HCT116 (cell line): ENCODE measurements at regions of chr17 and their contacts with region 1.

Region 1: GRCh38 chr17:48804925-48805411 is 12.1 kb downstream of the TTLL6 start:
- DNase-seq: peak; percentile 77
- ATAC-seq: peak; percentile 100
- H3K4me3 ChIP-seq: peak overlapping the region in 1 of 2 experiments; percentile 4; a peak in 2 of 4 replicates
- H3K27ac ChIP-seq: no peak overlapping the region
- H3K4me1 ChIP-seq: peaks cover 4 to 11% of the 10 kb centered on the region in 2 experiments; a peak in 3 of 4 replicates
- H3K27me3 ChIP-seq: no peaks in the 10 kb centered on the region
- CTCF ChIP-seq: peak; percentile 97 to 100 (median 100)
- POLR2A ChIP-seq: no peak
- RAD21 ChIP-seq: peak; percentile 99

Region 2: GRCh38 chr17:48335858-48336500 is 469.0 kb before region 1 on chr17:
- CTCF ChIA-PET with region 1: no interaction called
- POLR2A ChIA-PET with region 1: no interaction called
- RAD21 ChIA-PET with region 1: no interaction called
- intact Hi-C with region 1: no loop called
- DNase-seq: peak; percentile 78
- ATAC-seq: peak; percentile 85
- H3K4me3 ChIP-seq: no peak overlapping the region
- H3K27ac ChIP-seq: no peak overlapping the region
- H3K4me1 ChIP-seq: peaks cover 0 to 9% of the 10 kb centered on the region in 2 experiments; a peak in 2 of 4 replicates
- H3K27me3 ChIP-seq: no peaks in the 10 kb centered on the region
- CTCF ChIP-seq: peak; percentile 64 to 93 (median 92)
- POLR2A ChIP-seq: no peak
- RAD21 ChIP-seq: peak; percentile 85

Region 3: DNA sequence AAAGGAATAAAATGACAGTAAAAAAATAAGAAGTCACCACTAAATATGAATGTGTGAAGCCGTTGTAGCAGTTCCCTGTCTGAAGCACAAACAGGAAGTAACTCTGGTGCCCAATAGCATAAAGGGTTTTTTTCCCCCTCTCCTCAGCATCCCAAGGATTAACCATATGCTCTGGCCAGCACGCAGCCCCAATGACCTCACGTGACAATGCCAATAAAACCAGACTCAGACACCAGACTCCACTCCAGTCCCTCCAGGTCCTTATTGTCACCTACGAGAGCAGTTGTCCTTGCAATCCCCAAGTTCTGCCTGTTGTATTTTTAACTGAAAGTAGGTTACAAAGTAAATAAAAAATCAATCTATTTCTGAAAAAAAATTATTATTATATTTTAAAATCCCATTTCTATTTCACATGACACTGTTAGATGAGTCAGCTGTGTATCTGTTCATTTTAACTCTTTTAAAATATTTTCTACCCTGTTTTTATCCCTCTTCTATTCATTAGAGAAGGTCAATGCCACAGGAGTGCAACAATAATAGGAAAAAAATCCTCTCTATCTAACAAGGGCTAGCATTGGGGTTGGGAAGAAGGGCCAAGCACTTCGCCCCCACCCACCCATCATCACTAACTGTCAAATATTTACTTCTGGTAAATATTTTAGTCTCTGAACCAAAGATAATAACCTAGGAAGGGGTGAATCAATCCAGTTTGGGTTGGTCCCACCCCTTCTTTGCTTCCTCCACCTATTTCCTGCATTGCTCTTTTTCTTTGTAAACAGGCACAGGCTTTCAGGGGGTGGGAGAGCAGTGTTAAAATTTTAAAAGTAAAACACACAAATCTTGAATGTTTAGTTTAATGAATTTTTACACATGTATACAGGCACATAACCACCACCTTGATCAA is 89.2 kb before region 1 on chr17:
- CTCF ChIA-PET with region 1: no interaction called
- POLR2A ChIA-PET with region 1: no interaction called
- RAD21 ChIA-PET with region 1: no interaction called
- intact Hi-C with region 1: no loop called
- DNase-seq: no peak
- ATAC-seq: no peak
- H3K4me3 ChIP-seq: no peak overlapping the region
- H3K27ac ChIP-seq: no peak overlapping the region
- H3K4me1 ChIP-seq: no peaks in the 10 kb centered on the region
- H3K27me3 ChIP-seq: 0 out of 2 replicates have a peak, but pooled peaks cover 4% of the 10 kb centered on the region
- CTCF ChIP-seq: no peak
- POLR2A ChIP-seq: no peak
- RAD21 ChIP-seq: no peak

Region 4: GRCh38 chr17:48816774-48817590 is 12.0 kb after region 1 on chr17 and contains the start of gene TTLL6:
- CTCF ChIA-PET with region 1: interaction called, 60 read pairs
- POLR2A ChIA-PET with region 1: interaction called, 8 read pairs
- RAD21 ChIA-PET with region 1: no interaction called
- intact Hi-C with region 1: no loop called
- DNase-seq: peak; percentile 89
- ATAC-seq: peak; percentile 98
- H3K4me3 ChIP-seq: peak within 1 kb of the TSS; percentile 41 to 59
- H3K27ac ChIP-seq: no peak within 1 kb of the TSS; the same call in 1 of the 2 replicates
- H3K4me1 ChIP-seq: peaks cover 9 to 17% of the 10 kb centered on the region in 2 experiments
- H3K27me3 ChIP-seq: no peaks in the 10 kb centered on the region
- CTCF ChIP-seq: no peak
- POLR2A ChIP-seq: no peak
- RAD21 ChIP-seq: no peak
- total RNA-seq, gene TTLL6: 0.79 TPM

Region 5: GRCh38 chr17:48871551-48872351 is 66.8 kb after region 1 on chr17:
- CTCF ChIA-PET with region 1: interaction called, 237 read pairs
- POLR2A ChIA-PET with region 1: no interaction called
- RAD21 ChIA-PET with region 1: interaction called in 1 of 2 experiments, 3 read pairs
- intact Hi-C with region 1: no loop called
- DNase-seq: no peak
- ATAC-seq: no peak
- H3K4me3 ChIP-seq: no peak overlapping the region
- H3K27ac ChIP-seq: no peak overlapping the region
- H3K4me1 ChIP-seq: peaks cover 6 to 8% of the 10 kb centered on the region in 2 experiments; a peak in 2 of 4 replicates
- H3K27me3 ChIP-seq: no peaks in the 10 kb centered on the region
- CTCF ChIP-seq: no peak
- POLR2A ChIP-seq: no peak
- RAD21 ChIP-seq: no peak